WTC11 (cell line): ENCODE measurements at regions of chr18 and their contacts with region 1.

Region 1: GRCh38 chr18:10560450-10561045 is 34.7 kb downstream of the NAPG start:
- DNase-seq: peak; percentile 86
- ATAC-seq: peak; percentile 89
- H3K4me3 Mint-ChIP-seq: peak overlapping the region; percentile 41
- H3K27ac Mint-ChIP-seq: no peak overlapping the region
- H3K4me1 Mint-ChIP-seq: peaks cover 7% of the 10 kb centered on the region
- H3K27me3 Mint-ChIP-seq: no peaks in the 10 kb centered on the region
- CTCF ChIP-seq: peak; percentile 69

Region 2: GRCh38 chr18:10216791-10217190 is 343.8 kb before region 1 on chr18:
- CTCF ChIA-PET with region 1: no interaction called
- POLR2A ChIA-PET with region 1: no interaction called
- DNase-seq: no peak
- ATAC-seq: no peak
- H3K4me3 Mint-ChIP-seq: no peak overlapping the region
- H3K27ac Mint-ChIP-seq: no peak overlapping the region
- H3K4me1 Mint-ChIP-seq: peaks cover 4% of the 10 kb centered on the region; the same call in 1 of the 2 replicates
- H3K27me3 Mint-ChIP-seq: no peaks in the 10 kb centered on the region; the same call in 1 of the 2 replicates
- CTCF ChIP-seq: no peak

Region 3: GRCh38 chr18:10424585-10425307 is 135.8 kb before region 1 on chr18:
- CTCF ChIA-PET with region 1: no interaction called
- POLR2A ChIA-PET with region 1: no interaction called
- DNase-seq: no peak
- ATAC-seq: no peak
- H3K4me3 Mint-ChIP-seq: no peak overlapping the region
- H3K27ac Mint-ChIP-seq: no peak overlapping the region
- H3K4me1 Mint-ChIP-seq: no peaks in the 10 kb centered on the region
- H3K27me3 Mint-ChIP-seq: no peaks in the 10 kb centered on the region
- CTCF ChIP-seq: no peak

Region 4: GRCh38 chr18:10544093-10544748 is 16.3 kb before region 1 on chr18:
- CTCF ChIA-PET with region 1: interaction called, 14 read pairs
- POLR2A ChIA-PET with region 1: no interaction called
- DNase-seq: peak; percentile 34
- ATAC-seq: peak; percentile 66
- H3K4me3 Mint-ChIP-seq: no peak overlapping the region
- H3K27ac Mint-ChIP-seq: no peak overlapping the region
- H3K4me1 Mint-ChIP-seq: no peaks in the 10 kb centered on the region
- H3K27me3 Mint-ChIP-seq: no peaks in the 10 kb centered on the region
- CTCF ChIP-seq: no peak

Region 5: GRCh38 chr18:10679557-10680270 is 119.2 kb after region 1 on chr18:
- CTCF ChIA-PET with region 1: interaction called, 10 read pairs
- POLR2A ChIA-PET with region 1: no interaction called
- DNase-seq: no peak
- ATAC-seq: no peak
- H3K4me3 Mint-ChIP-seq: no peak overlapping the region
- H3K27ac Mint-ChIP-seq: no peak overlapping the region
- H3K4me1 Mint-ChIP-seq: no peaks in the 10 kb centered on the region
- H3K27me3 Mint-ChIP-seq: no peaks in the 10 kb centered on the region; the same call in 1 of the 2 replicates
- CTCF ChIP-seq: no peak

Region 6: GRCh38 chr18:10752382-10752781 is 191.8 kb after region 1 on chr18:
- CTCF ChIA-PET with region 1: interaction called, 15 read pairs
- POLR2A ChIA-PET with region 1: no interaction called
- DNase-seq: no peak
- ATAC-seq: no peak
- H3K4me3 Mint-ChIP-seq: no peak overlapping the region
- H3K27ac Mint-ChIP-seq: no peak overlapping the region
- H3K4me1 Mint-ChIP-seq: peaks cover 2% of the 10 kb centered on the region; the same call in 1 of the 2 replicates
- H3K27me3 Mint-ChIP-seq: no peaks in the 10 kb centered on the region
- CTCF ChIP-seq: no peak

Region 7: DNA sequence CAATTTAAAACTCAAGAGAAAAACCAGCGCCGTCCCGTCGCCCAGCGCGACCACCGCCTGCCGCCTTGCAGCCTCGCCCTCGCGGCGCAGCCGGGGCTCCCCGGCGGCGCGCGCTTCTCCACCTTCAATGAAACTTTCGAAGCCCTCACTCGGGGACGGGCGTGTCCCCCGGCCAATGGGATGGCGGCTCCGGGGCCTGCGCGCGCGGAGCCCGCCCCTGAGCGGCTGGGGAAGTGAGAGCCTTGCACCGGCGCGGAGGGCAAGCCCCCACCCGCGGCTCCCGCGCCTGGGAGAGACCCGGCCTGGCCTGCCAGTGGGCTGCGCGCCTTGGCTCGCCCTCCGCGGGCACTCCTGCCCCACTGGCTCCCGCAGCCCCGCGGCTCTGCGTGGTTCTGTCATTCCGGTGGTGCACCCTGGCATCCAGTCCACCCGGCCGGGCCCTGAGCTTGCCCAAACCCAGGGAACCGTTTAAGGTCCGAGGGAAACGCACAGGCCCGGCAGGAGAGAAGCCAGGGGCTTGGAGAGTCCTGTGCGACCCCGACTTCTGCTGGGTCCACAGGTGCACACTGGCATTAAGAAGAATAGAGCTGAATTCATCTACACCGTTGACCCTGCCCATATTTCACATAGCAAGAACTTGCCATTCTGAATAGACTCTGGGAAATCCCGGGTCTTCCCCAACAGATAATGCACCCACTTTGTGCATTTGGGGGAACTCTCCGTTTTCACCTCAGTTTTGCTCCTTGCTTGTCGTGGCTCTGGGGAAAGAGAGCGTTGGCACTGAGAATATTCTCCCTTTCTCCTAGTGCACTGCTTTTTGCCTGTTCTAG is 589.1 kb after region 1 on chr18 and contains the start of gene PIEZO2:
- CTCF ChIA-PET with region 1: interaction called, 31 read pairs
- POLR2A ChIA-PET with region 1: no interaction called
- DNase-seq: peak; percentile 84
- ATAC-seq: peak; percentile 78
- H3K4me3 Mint-ChIP-seq: peak within 1 kb of the TSS; percentile 71
- H3K27ac Mint-ChIP-seq: peak within 1 kb of the TSS; percentile 88
- H3K4me1 Mint-ChIP-seq: peaks cover 52% of the 10 kb centered on the region
- H3K27me3 Mint-ChIP-seq: peaks cover 43% of the 10 kb centered on the region
- CTCF ChIP-seq: no peak
- total RNA-seq, gene PIEZO2: 10.7 to 16.9 TPM (median 15.1 TPM) in 3 replicates